Activated T-helper 1 cell treated with anti-CD3 and anti-CD28 coated beads, Interleukin-12 subunit alpha, Interleukin-12 subunit beta, Interleukin-2, Interleukin-4 antibody, amounts not matched to agents 30 ng/mL and 10 ng/mL and 1 ng/mL, durations not matched to agents 14 hours and 24 hours and 36 hours (primary cell): ENCODE measurements at regions of chr9 and their contacts with region 1.

Region 1: GRCh38 chr9:98263482-98264357 is 8.3 kb upstream of the TBC1D2 start:
- DNase-seq: peak; percentile 72
- H3K4me3 Mint-ChIP-seq: no peak overlapping the region
- H3K27ac Mint-ChIP-seq: no peak overlapping the region
- H3K4me1 Mint-ChIP-seq: no peaks in the 10 kb centered on the region
- H3K27me3 Mint-ChIP-seq: peaks cover 9% of the 10 kb centered on the region

Region 2: GRCh38 chr9:97906236-97906831 is 357.4 kb before region 1 on chr9:
- intact Hi-C with region 1: loop called (anchors 5 kb)
- DNase-seq: no peak
- H3K4me3 Mint-ChIP-seq: peak overlapping the region; percentile 72
- H3K27ac Mint-ChIP-seq: peak overlapping the region; percentile 98
- H3K4me1 Mint-ChIP-seq: peaks cover 81% of the 10 kb centered on the region
- H3K27me3 Mint-ChIP-seq: no peaks in the 10 kb centered on the region

Region 3: DNA sequence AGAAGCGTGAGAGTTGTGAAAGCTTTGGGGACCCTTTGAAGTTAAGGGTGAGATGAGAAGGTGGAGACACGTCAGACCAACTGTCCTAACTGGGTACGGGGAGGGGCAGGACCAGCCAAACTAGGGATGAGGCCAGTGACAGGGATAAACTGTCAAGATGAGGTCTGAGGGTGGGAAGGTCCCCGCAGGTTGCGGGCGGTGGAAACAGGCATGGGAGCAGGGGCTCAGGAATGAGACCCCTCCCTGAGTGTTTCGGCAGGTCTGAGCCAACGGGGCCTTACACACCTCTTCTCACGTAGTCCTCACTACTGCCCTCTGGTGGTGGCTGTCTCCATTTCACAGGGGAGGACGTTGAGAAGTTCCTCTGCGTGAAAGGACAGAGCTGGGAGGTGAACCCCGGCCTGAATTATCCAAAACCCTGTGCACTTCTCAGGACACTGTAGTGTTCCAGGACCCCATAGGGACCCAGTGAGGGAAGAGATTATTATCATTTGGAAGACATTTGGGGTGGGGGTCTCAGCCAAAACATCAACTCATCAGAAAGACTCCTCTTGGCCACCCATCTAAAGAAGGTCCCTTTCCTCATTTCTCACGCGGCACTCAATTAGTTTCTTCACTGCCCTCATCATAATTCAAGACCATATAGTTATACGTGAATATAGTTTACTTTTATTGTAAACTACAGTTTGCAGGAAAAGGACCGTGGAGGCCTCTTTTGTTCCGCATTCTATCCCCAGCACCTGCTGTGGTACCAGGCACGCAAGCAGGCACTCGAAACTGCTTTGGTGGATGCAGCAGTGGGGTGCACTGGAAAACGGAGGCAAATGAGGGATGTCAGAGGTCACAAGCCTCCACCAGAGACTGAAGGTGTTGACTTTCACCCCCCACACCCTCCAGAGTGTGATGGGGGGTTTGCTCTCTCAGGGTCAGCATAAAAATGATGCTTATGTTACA is 228.8 kb before region 1 on chr9:
- intact Hi-C with region 1: no loop called
- DNase-seq: peak; percentile 80
- H3K4me3 Mint-ChIP-seq: no peak overlapping the region
- H3K27ac Mint-ChIP-seq: peak overlapping the region; percentile 50
- H3K4me1 Mint-ChIP-seq: peaks cover 10% of the 10 kb centered on the region
- H3K27me3 Mint-ChIP-seq: peaks cover 2% of the 10 kb centered on the region

Region 4: GRCh38 chr9:98204692-98205091 is 59.0 kb before region 1 on chr9:
- intact Hi-C with region 1: loop called (anchors 1 kb)
- DNase-seq: no peak
- H3K4me3 Mint-ChIP-seq: no peak overlapping the region
- H3K27ac Mint-ChIP-seq: no peak overlapping the region
- H3K4me1 Mint-ChIP-seq: peaks cover 9% of the 10 kb centered on the region
- H3K27me3 Mint-ChIP-seq: no peaks in the 10 kb centered on the region